Activated CD4-positive, alpha-beta memory T cell treated with anti-CD3 and anti-CD28 coated beads for 36 hours (primary cell): ENCODE measurements at regions of chr3 and their contacts with region 1.

Region 1: DNA sequence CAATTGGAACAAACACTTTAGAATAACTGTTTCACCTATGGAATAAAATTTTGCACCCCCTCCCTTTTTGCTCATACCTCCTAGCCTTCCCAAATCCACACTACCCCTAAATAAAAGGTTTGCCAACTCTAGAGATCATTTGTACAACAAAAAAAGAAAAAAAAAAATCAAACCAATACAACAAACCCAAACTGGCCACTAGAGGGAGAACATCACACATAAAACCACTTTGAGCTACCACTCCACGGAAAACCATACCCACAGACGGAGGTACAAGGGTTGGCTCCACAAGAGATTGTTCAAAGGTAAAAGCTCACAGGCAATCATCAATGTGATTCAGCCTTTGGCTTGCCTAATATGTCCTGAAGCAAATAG is 47.6 kb downstream of the SETMAR start:
- DNase-seq: peak; percentile 53
- H3K4me3 Mint-ChIP-seq: peak overlapping the region; percentile 45
- H3K27ac Mint-ChIP-seq: peak overlapping the region; percentile 92
- H3K4me1 Mint-ChIP-seq: peaks cover 21% of the 10 kb centered on the region
- H3K27me3 Mint-ChIP-seq: no peaks in the 10 kb centered on the region

Region 2: DNA sequence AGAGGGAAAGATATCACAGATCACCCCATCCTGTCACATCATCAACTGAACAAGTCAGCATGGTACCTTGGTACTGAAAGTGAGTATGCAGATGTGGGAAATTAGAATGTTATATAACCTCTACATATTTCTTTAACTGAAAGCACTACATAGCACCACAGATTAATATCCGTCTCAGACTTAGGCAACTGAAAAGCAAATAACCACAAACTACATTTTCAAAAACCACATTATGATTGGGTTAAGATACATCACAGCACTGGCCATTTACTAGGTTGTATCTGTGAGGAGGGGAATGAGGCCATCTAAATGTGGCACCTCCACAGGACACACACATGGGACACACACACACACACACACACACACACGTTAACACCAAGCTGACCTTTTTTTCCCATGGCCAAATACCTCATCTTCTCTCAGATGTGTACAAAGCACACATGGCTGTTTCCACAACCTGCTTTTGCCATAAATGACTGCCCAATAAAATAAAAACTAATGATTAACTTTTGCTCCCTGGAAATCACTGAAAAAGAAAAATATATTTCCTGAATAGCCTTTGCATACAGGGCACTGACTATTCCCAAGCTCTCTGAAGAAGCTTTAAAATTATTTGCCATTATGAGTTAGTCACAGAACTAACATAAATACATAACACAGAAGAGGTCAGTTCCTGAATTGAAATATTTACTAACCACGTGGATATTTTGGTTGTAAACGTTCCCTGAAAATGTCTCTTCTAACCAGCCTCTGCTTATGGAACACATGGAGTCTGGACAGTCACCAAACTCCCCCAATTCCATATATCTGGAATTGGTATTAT is 56.2 kb after region 1 on chr3:
- CTCF ChIA-PET with region 1: interaction called, 6 read pairs
- POLR2A ChIA-PET with region 1: interaction called, 4 read pairs
- intact Hi-C with region 1: loop called (anchors 1 kb)
- DNase-seq: no peak
- H3K4me3 Mint-ChIP-seq: no peak overlapping the region
- H3K27ac Mint-ChIP-seq: no peak overlapping the region
- H3K4me1 Mint-ChIP-seq: peaks cover 47% of the 10 kb centered on the region
- H3K27me3 Mint-ChIP-seq: no peaks in the 10 kb centered on the region

Region 3: GRCh38 chr3:4466741-4467521 is 116.2 kb after region 1 on chr3 and contains the start of gene SUMF1:
- CTCF ChIA-PET with region 1: interaction called, 13 read pairs
- POLR2A ChIA-PET with region 1: interaction called, 5 read pairs
- intact Hi-C with region 1: loop called (anchors 1 kb)
- DNase-seq: peak; percentile 84
- H3K4me3 Mint-ChIP-seq: peak within 1 kb of the TSS; percentile 90
- H3K27ac Mint-ChIP-seq: peak within 1 kb of the TSS; percentile 87
- H3K4me1 Mint-ChIP-seq: peaks cover 14% of the 10 kb centered on the region
- H3K27me3 Mint-ChIP-seq: no peaks in the 10 kb centered on the region
- total RNA-seq, gene SUMF1: 5.1 to 5.6 TPM

Region 4: DNA sequence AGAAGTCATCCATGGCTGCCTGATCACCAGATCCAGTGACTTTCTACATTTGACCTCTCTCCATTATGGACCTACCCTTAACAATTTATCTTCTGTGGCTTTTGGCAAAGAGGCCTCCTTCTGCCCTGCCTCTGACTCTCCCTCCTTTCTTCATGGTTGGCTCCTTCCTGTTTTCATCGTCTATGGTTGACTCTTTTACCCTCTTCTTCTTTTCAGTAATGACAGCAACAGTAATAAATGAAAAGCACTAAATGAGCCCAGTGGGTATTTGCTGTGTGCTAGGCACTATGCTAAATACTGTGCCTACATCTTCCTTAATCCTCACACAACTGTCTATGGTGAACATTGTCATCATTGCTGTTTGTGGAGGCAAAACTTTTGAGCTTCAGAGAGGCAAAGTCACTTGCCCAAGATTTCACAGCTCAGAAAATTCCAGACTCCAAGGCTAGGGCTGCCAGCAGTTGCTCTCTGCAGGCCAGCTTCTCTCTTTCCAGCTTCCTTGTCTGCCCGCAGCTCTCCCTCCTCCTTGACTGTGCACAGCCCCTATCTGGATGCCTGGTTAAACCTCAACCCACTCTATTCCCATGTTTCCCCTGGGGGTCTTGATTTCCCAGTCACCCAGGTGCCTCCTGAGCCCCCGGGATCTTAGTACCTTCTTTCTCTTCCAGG is 167.0 kb after region 1 on chr3:
- CTCF ChIA-PET with region 1: interaction called, 24 read pairs
- POLR2A ChIA-PET with region 1: interaction called, 4 read pairs
- intact Hi-C with region 1: loop called (anchors 1 kb)
- DNase-seq: no peak
- H3K4me3 Mint-ChIP-seq: no peak overlapping the region
- H3K27ac Mint-ChIP-seq: peak overlapping the region; percentile 69
- H3K4me1 Mint-ChIP-seq: peaks cover 28% of the 10 kb centered on the region
- H3K27me3 Mint-ChIP-seq: no peaks in the 10 kb centered on the region

Region 5: DNA sequence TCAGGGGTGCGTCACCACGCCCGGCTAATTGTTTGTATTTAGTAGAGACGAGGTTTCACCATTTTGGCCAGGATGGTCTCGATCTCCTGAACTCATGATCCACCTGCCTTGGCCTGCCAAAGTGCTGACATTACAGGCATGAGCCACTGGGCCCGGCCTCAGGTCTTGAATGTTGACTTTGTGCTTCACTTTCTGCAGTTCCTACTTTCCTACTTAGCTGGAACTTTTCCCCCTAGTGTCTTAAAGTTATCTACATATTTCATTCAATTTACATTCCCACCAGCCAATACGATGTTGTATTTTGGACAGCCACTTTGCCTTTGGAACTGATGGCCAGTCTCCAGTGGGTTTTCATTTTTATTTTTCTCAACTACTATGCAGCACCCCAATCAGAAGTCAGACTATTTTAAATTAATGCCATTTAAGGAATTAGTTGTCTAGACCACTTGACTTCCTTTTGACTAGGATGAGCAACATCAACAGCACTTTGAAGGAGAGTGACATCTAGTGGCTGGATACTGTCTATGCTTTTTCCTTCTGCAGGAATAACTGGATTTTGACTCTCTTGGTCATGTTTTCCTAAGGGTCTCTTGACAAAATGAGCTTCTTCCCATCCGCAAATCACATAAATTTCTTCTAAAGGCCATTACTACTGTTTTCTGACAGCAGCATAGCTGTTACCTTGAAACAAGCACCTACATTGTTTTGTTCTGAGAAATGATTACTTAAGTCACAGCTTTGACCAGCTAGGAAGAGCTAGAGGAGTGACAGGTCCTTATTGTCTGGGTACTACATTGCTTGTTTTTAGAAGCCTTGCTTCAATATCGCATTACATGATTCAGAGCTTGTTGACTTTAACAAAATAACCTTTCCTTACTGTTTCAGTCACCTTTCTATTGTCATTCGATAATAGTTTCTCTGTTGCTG is 282.6 kb after region 1 on chr3:
- CTCF ChIA-PET with region 1: interaction called, 131 read pairs
- POLR2A ChIA-PET with region 1: no interaction called
- intact Hi-C with region 1: loop called (anchors 1 kb)
- DNase-seq: no peak
- H3K4me3 Mint-ChIP-seq: no peak overlapping the region
- H3K27ac Mint-ChIP-seq: no peak overlapping the region
- H3K4me1 Mint-ChIP-seq: peaks cover 5% of the 10 kb centered on the region
- H3K27me3 Mint-ChIP-seq: no peaks in the 10 kb centered on the region